ENCODE measurements at regions of chr4 and their contacts with region 1.

Region 1: GRCh38 chr4:86934771-86935565 is at the start of gene AFF1:
- DNase-seq: peak; percentile 98
- H3K4me3 ChIP-seq: peak within 1 kb of the TSS; percentile 71 to 84
- H3K27ac ChIP-seq: peak within 1 kb of the TSS; percentile 77 to 78
- H3K4me1 ChIP-seq: peaks cover 4 to 11% of the 10 kb centered on the region in 2 experiments; a peak in 3 of 4 replicates
- H3K27me3 ChIP-seq: no peaks in the 10 kb centered on the region
- CTCF ChIP-seq: peak; percentile 38
- EP300 ChIP-seq: no peak
- RAD21 ChIP-seq: peak; percentile 9
- polyA plus RNA-seq, gene AFF1: 2.2 and 2.7 TPM in 2 replicates

Region 2: GRCh38 chr4:87006676-87007527 is 71.9 kb after region 1 on chr4:
- CTCF ChIA-PET with region 1: interaction called, 14 read pairs
- POLR2A ChIA-PET with region 1: interaction called, 14 read pairs
- DNase-seq: peak; percentile 95
- H3K4me3 ChIP-seq: peak overlapping the region; percentile 88 to 90
- H3K27ac ChIP-seq: peak overlapping the region; percentile 98 to 99
- H3K4me1 ChIP-seq: peaks cover 6 to 11% of the 10 kb centered on the region in 2 experiments; a peak in 2 of 4 replicates
- H3K27me3 ChIP-seq: no peaks in the 10 kb centered on the region
- CTCF ChIP-seq: peak; percentile 3; the same call in 1 of the 2 replicates
- EP300 ChIP-seq: peak in 1 of 2 experiments; percentile 5; a peak in 1 of 4 replicates
- RAD21 ChIP-seq: no peak; the same call in 1 of the 2 replicates

Measured in SK-N-SH (cell line).